Mammary epithelial cell (primary cell): ENCODE measurements at regions of chr17 and their contacts with region 1.

Region 1: GRCh38 chr17:79354173-79354820 is 256.6 kb downstream of the RBFOX3 start:
- DNase-seq: no peak
- H3K4me3 ChIP-seq: no peak overlapping the region
- H3K27ac ChIP-seq: no peak overlapping the region
- H3K4me1 ChIP-seq: no peaks in the 10 kb centered on the region
- H3K27me3 ChIP-seq: peaks cover 2% of the 10 kb centered on the region
- CTCF ChIP-seq: no peak

Region 2: GRCh38 chr17:79304884-79305283 is 49.4 kb before region 1 on chr17:
- CTCF ChIA-PET with region 1: no interaction called
- dilution Hi-C with region 1: loop called (anchors 5 kb)
- in situ Hi-C with region 1: no loop called
- intact Hi-C with region 1: no loop called
- DNase-seq: no peak
- H3K4me3 ChIP-seq: no peak overlapping the region
- H3K27ac ChIP-seq: no peak overlapping the region
- H3K4me1 ChIP-seq: no peaks in the 10 kb centered on the region
- H3K27me3 ChIP-seq: peaks cover 15% of the 10 kb centered on the region
- CTCF ChIP-seq: no peak